ENCODE measurements at regions of chr10 and their contacts with region 1.

Region 1: DNA sequence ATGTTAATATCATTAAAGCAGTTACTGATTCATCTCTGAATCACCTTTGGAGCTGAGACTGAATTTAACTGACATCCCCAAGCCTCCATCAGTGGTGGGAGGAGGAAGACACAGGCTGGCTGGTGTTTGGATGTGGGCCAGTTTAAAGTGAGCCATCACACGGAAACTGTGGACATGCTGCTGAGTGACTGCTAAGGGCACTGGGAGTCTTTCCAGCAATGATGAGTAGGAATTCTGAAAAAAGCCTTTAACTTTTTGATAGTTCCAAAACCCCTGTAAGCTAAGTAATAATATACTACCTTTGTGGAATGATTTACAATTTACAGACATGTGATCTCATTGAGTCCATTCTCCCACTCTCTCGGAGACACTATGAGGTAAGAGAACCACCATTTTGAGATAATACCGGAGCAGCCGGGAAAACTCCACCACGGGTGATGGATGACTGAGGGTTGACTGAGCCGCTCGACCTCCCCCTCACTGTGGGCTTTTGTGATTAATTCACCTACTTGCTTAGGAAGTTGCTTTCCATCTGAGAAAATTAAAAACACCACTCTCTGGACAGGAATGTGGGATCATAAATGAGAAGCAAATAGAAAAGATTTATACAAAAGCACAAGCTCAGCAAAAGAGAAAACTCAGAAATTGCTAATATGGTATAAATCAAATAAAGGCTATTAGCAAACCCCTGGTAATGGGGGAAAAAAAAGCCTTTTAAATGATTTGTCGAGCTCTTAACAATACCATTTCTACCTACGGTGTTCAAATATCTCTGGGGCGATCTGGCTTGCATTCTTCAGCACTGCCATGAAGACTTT is 194.8 kb downstream of the FANK1 start:
- DNase-seq: peak; percentile 97
- ATAC-seq: peak; percentile 83
- H3K4me3 ChIP-seq: no peak overlapping the region
- H3K27ac ChIP-seq: no peak overlapping the region
- H3K4me1 ChIP-seq: peaks cover 2% of the 10 kb centered on the region
- H3K27me3 ChIP-seq: no peaks in the 10 kb centered on the region
- CTCF ChIP-seq: no peak
- POLR2A ChIP-seq: no peak
- RAD21 ChIP-seq: no peak

Region 2: DNA sequence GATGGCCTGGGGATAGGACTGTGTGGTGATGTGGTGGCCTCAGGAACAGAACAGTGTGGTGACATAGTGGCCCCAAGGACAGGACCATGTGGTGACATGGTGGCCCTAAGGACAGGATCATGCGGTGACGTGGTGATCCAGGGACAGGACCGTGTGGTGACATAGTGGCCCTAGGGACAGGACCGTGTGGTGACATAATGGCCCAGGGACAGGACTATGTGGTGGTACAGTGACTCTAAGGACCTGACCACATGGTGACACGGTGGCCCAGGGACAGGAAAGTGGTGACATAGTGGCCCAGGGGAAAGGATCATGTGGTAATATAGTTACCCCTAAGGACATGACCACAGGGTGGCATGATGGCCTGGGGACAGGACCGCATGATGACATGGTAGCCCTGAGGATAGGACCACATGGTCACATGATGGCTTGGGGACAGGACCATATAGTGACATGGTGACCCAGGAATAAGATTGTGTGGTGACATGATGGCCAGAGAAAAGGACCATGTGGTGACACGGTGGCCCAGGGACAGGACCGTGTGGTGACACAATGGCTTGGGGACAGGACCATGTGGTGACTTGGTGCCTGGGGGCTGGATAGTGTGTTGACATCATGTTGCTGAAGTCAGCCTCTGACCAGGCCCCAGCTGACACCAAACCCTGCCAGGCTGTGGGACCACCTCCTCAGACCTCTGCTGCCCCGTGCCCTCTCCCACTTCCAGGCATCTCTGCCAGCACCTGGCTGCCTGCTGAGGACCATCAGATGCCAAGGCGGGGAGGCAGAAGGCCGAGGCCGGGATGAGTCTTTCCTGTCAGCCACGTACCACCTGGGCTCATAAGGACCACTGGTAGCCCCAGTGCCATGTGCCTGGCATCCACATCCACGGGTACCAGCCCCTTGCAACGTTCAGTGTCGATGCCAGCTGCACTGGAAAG is 197.7 kb after region 1 on chr10:
- CTCF ChIA-PET with region 1: no interaction called
- POLR2A ChIA-PET with region 1: interaction called, 17 read pairs
- dilution Hi-C with region 1: no loop called
- in situ Hi-C with region 1: no loop called
- intact Hi-C with region 1: no loop called
- DNase-seq: no peak
- ATAC-seq: no peak
- H3K4me3 ChIP-seq: no peak overlapping the region
- H3K27ac ChIP-seq: no peak overlapping the region
- H3K4me1 ChIP-seq: no peaks in the 10 kb centered on the region
- H3K27me3 ChIP-seq: no peaks in the 10 kb centered on the region
- CTCF ChIP-seq: no peak
- POLR2A ChIP-seq: no peak
- RAD21 ChIP-seq: no peak